Activated B cell treated with CpG ODN at 0.5 μM for 24 hours (primary cell): ENCODE measurements at regions of chr9 and their contacts with region 1.

Region 1: DNA sequence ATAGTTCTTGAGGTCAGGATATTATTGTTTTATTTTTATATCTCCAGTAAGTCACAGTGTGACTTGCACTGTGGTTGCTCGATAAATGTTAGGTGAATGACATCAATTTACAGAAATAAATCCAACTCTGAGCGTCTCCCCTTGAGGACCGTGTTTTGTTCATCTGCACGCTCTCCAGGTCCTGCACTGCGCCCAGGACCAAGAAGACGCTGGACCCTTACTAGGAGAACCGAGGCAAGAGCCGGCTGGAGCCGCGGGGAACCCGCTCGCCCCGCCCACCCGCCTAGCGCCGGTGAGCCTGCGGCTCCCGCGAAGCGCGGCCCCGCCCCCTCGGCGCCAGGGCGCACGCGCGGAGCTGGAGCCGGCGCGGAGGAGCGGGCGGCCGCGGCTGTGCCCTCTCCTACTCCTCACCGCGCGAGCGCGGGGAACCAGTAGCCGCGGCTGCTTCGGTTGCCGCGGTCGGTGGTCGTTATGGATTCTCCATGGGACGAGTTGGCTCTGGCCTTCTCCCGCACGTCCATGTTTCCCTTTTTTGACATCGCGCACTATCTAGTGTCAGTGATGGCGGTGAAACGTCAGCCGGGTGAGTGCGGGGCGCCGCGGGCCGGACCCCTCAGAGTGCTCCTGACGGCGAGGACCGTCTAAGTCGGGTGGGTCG is at the start of gene TMEM38B:
- DNase-seq: peak; percentile 85
- ATAC-seq: peak; percentile 80
- H3K4me3 Mint-ChIP-seq: peak within 1 kb of the TSS; percentile 89
- H3K27ac Mint-ChIP-seq: peak within 1 kb of the TSS; percentile 84
- H3K4me1 Mint-ChIP-seq: peaks cover 23% of the 10 kb centered on the region
- H3K27me3 Mint-ChIP-seq: peaks cover 19% of the 10 kb centered on the region
- CTCF ChIP-seq: no peak
- total RNA-seq, gene TMEM38B: 10.9 and 12.7 TPM in 2 replicates

Region 2: GRCh38 chr9:104765138-104765537 is 929.2 kb before region 1 on chr9:
- CTCF ChIA-PET with region 1: no interaction called
- POLR2A ChIA-PET with region 1: no interaction called
- intact Hi-C with region 1: loop called (anchors 2 kb)
- DNase-seq: no peak
- ATAC-seq: peak; percentile 8
- H3K4me3 Mint-ChIP-seq: peak overlapping the region; percentile 90
- H3K27ac Mint-ChIP-seq: peak overlapping the region; percentile 90
- H3K4me1 Mint-ChIP-seq: peaks cover 44% of the 10 kb centered on the region
- H3K27me3 Mint-ChIP-seq: no peaks in the 10 kb centered on the region
- CTCF ChIP-seq: no peak

Region 3: GRCh38 chr9:105244003-105244733 is 450.2 kb before region 1 on chr9 and contains the start of gene SLC44A1:
- CTCF ChIA-PET with region 1: no interaction called
- POLR2A ChIA-PET with region 1: no interaction called
- intact Hi-C with region 1: loop called (anchors 1 kb)
- DNase-seq: peak; percentile 86
- ATAC-seq: peak; percentile 82
- H3K4me3 Mint-ChIP-seq: peak within 1 kb of the TSS; percentile 92
- H3K27ac Mint-ChIP-seq: peak within 1 kb of the TSS; percentile 84
- H3K4me1 Mint-ChIP-seq: peaks cover 29% of the 10 kb centered on the region
- H3K27me3 Mint-ChIP-seq: peaks cover 8% of the 10 kb centered on the region
- CTCF ChIP-seq: no peak
- total RNA-seq, gene SLC44A1: 9.5 and 10.1 TPM in 2 replicates

Region 4: DNA sequence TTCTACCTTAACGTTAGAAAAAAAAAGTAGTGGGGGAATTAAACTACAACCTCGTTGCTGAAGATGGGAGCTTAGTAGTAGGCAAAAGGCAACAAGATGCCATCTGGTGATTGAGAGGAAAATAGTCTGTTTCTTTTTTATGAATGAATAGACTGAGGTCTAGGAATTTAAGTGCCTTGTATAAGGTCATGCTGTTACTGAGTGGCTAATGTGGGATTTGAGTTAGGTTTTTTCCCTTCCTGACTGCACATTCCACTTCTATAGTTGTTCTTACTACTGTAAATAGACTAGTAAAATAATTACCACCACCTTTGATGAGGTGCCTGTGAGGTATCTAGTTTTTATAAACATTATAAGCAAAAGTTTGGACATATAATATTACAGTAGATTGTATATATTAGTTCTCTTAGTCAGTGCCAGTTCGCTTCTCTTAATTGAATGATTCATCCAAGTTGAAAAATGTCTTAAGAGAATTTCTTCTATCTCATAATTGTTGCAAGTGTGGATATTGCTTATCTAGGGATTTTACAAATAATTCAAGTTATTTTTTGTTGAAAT is 227.3 kb before region 1 on chr9:
- CTCF ChIA-PET with region 1: no interaction called
- POLR2A ChIA-PET with region 1: no interaction called
- intact Hi-C with region 1: no loop called
- DNase-seq: no peak
- ATAC-seq: no peak
- H3K4me3 Mint-ChIP-seq: no peak overlapping the region
- H3K27ac Mint-ChIP-seq: no peak overlapping the region
- H3K4me1 Mint-ChIP-seq: no peaks in the 10 kb centered on the region
- H3K27me3 Mint-ChIP-seq: no peaks in the 10 kb centered on the region
- CTCF ChIP-seq: no peak

Region 5: GRCh38 chr9:105510024-105510423 is 184.3 kb before region 1 on chr9:
- CTCF ChIA-PET with region 1: no interaction called
- POLR2A ChIA-PET with region 1: no interaction called
- intact Hi-C with region 1: no loop called
- DNase-seq: no peak
- ATAC-seq: no peak
- H3K4me3 Mint-ChIP-seq: no peak overlapping the region
- H3K27ac Mint-ChIP-seq: peak overlapping the region; percentile 56
- H3K4me1 Mint-ChIP-seq: peaks cover 9% of the 10 kb centered on the region
- H3K27me3 Mint-ChIP-seq: no peaks in the 10 kb centered on the region
- CTCF ChIP-seq: no peak

Region 6: DNA sequence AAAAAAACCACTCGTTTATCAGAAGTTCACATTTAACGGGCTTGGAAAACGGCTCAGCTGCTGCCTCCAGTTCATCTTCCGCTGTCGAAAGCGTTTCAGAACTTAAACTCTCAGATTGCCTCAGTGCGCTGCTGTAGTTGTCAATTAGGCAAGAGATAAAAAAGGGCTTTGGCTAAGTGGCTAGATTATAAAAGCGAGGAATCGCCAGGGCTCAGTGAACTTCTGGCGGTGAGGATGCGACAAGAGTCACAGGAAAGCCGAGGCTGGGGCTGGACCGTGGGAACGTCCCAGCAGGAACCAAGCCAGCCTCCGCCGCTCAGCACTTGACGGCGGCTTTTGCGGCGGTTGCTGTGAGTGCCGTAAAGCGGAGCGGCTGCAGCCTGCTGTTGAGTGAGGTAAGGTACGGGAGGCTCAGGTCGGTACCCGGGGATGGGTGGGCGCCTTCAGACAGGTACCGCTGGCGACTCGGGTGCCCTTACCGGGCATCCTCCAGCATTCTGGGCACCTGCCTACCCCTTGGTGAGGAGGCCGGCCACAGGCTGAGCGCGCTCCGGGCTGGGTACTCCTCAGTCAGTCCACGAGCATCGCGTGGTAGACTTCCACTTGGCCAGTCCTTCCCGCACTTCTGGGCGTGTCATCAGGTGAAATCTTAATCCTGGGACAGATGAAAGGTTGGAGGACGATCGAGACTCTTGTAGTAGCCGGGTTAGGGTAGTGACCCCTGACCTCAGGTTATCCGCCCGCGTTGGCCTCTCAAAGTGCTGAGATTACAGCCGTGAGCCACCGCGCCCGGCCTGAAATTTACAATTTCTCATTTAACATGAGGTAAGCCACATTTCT is 136.3 kb before region 1 on chr9 and contains the start of gene FKTN:
- CTCF ChIA-PET with region 1: no interaction called
- POLR2A ChIA-PET with region 1: no interaction called
- intact Hi-C with region 1: loop called (anchors 2 kb)
- DNase-seq: peak; percentile 72
- ATAC-seq: peak; percentile 99
- H3K4me3 Mint-ChIP-seq: peak within 1 kb of the TSS; percentile 96
- H3K27ac Mint-ChIP-seq: peak within 1 kb of the TSS; percentile 83
- H3K4me1 Mint-ChIP-seq: peaks cover 20% of the 10 kb centered on the region
- H3K27me3 Mint-ChIP-seq: no peaks in the 10 kb centered on the region
- CTCF ChIP-seq: no peak
- total RNA-seq, gene FKTN: 16.8 and 17.5 TPM in 2 replicates

Region 7: DNA sequence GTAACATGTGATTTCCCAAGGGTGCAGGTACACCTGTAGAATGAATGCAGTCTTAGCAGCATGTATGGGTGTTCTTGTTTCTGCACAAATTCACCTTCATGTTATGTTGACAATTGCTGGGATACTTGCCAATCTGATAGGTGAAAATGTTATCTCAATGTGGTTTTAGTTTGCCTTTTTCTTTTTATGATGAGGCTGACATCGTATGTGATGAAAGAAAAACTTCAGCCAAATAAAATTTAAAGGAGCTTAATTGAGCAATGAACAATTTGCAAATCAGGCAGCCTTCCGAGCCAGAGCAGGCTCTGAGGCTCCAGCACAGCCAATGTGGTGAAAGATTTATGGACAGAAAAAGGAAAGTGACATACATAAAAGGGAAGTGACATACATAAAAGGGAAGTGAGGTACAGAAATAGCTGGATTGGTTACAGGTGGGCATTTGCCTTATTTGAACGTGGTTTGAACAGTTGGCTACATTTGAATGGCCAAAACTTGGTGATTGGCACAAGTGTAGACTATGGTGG is 21.5 kb before region 1 on chr9:
- CTCF ChIA-PET with region 1: no interaction called
- POLR2A ChIA-PET with region 1: interaction called, 4 read pairs
- intact Hi-C with region 1: loop called (anchors 1 kb)
- DNase-seq: no peak
- ATAC-seq: peak; percentile 21
- H3K4me3 Mint-ChIP-seq: peak overlapping the region; percentile 50
- H3K27ac Mint-ChIP-seq: no peak overlapping the region
- H3K4me1 Mint-ChIP-seq: peaks cover 17% of the 10 kb centered on the region
- H3K27me3 Mint-ChIP-seq: peaks cover 1% of the 10 kb centered on the region
- CTCF ChIP-seq: no peak

Region 8: GRCh38 chr9:105737205-105737604 is 42.9 kb after region 1 on chr9:
- CTCF ChIA-PET with region 1: no interaction called
- POLR2A ChIA-PET with region 1: no interaction called
- intact Hi-C with region 1: no loop called
- DNase-seq: no peak
- ATAC-seq: no peak
- H3K4me3 Mint-ChIP-seq: no peak overlapping the region
- H3K27ac Mint-ChIP-seq: no peak overlapping the region
- H3K4me1 Mint-ChIP-seq: no peaks in the 10 kb centered on the region
- H3K27me3 Mint-ChIP-seq: no peaks in the 10 kb centered on the region
- CTCF ChIP-seq: no peak

Region 9: GRCh38 chr9:107282753-107283625 is 1588.7 kb after region 1 on chr9 and contains the start of gene RAD23B:
- CTCF ChIA-PET with region 1: no interaction called
- POLR2A ChIA-PET with region 1: no interaction called
- intact Hi-C with region 1: loop called (anchors 5 kb)
- DNase-seq: peak; percentile 99
- ATAC-seq: peak; percentile 82
- H3K4me3 Mint-ChIP-seq: peak within 1 kb of the TSS; percentile 91
- H3K27ac Mint-ChIP-seq: peak within 1 kb of the TSS; percentile 93
- H3K4me1 Mint-ChIP-seq: peaks cover 64% of the 10 kb centered on the region
- H3K27me3 Mint-ChIP-seq: no peaks in the 10 kb centered on the region
- CTCF ChIP-seq: no peak
- total RNA-seq, gene RAD23B: 75.3 and 82.6 TPM in 2 replicates